Activated CD4-positive, alpha-beta memory T cell treated with anti-CD3 and anti-CD28 coated beads, Interleukin-2, amount 10 ng/mL, durations not matched to agents 7 days and 5 days (primary cell): ENCODE measurements at regions of chr12 and their contacts with region 1.

Region 1: GRCh38 chr12:6335451-6336078 is 6.3 kb downstream of the TNFRSF1A start:
- DNase-seq: peak; percentile 90
- H3K4me3 Mint-ChIP-seq: no peak overlapping the region
- H3K27ac Mint-ChIP-seq: no peak overlapping the region
- H3K4me1 Mint-ChIP-seq: no peaks in the 10 kb centered on the region
- H3K27me3 Mint-ChIP-seq: no peaks in the 10 kb centered on the region

Region 2: GRCh38 chr12:6323340-6323994 is 12.1 kb before region 1 on chr12:
- CTCF ChIA-PET with region 1: interaction called, 36 read pairs
- POLR2A ChIA-PET with region 1: interaction called, 7 read pairs
- DNase-seq: peak; percentile 46
- H3K4me3 Mint-ChIP-seq: peak overlapping the region; percentile 9
- H3K27ac Mint-ChIP-seq: peak overlapping the region; percentile 73
- H3K4me1 Mint-ChIP-seq: peaks cover 41% of the 10 kb centered on the region
- H3K27me3 Mint-ChIP-seq: peaks cover 3% of the 10 kb centered on the region

Region 3: GRCh38 chr12:6367065-6367968 is 31.8 kb after region 1 on chr12:
- CTCF ChIA-PET with region 1: interaction called, 71 read pairs
- POLR2A ChIA-PET with region 1: interaction called, 27 read pairs
- DNase-seq: peak; percentile 45
- H3K4me3 Mint-ChIP-seq: no peak overlapping the region
- H3K27ac Mint-ChIP-seq: peak overlapping the region; percentile 26
- H3K4me1 Mint-ChIP-seq: peaks cover 33% of the 10 kb centered on the region
- H3K27me3 Mint-ChIP-seq: no peaks in the 10 kb centered on the region

Region 4: DNA sequence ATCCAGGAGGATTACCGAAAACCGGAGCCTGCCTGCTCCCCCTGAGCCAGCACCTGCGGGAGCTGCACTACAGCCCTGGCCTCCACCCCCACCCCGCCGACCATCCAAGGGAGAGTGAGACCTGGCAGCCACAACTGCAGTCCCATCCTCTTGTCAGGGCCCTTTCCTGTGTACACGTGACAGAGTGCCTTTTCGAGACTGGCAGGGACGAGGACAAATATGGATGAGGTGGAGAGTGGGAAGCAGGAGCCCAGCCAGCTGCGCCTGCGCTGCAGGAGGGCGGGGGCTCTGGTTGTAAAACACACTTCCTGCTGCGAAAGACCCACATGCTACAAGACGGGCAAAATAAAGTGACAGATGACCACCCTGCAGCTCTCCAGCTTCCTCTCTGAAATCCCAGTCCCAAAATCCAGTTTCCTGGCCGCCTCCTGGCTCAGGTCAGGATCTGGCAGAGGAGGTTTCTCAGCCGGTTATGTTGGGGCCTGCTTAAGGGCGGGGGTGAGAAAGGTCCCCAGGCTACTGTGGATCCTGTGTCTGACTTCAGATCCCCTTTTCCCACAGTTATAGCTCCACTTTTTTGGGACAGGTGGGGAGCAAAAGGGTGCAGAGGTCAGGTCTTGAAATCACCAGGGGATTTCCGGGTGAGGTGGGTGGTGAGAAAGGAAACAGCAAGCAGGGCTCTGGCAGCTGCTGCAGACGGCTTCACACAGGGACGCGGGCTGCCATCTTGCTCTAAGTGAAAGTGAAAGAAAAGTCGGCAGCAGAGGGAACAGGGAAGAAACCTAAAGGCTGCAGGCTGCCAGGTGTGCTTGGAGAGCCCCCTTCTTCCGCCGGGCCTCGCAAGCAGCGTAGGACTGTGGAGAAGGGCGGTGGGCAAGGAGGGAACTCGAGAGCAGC is 116.0 kb after region 1 on chr12 and contains the start of gene TAPBPL:
- CTCF ChIA-PET with region 1: interaction called, 16 read pairs
- POLR2A ChIA-PET with region 1: interaction called, 20 read pairs
- DNase-seq: peak; percentile 83
- H3K4me3 Mint-ChIP-seq: peak within 1 kb of the TSS; percentile 99
- H3K27ac Mint-ChIP-seq: peak within 1 kb of the TSS; percentile 97
- H3K4me1 Mint-ChIP-seq: peaks cover 71% of the 10 kb centered on the region
- H3K27me3 Mint-ChIP-seq: no peaks in the 10 kb centered on the region
- total RNA-seq, gene TAPBPL: 45.0 to 49.0 TPM